ENCODE measurements at regions of chr6 and their contacts with region 1.

Region 1: GRCh38 chr6:134063966-134064445 is 11.6 kb upstream of the SLC2A12 start:
- DNase-seq: peak in 34 of 35 experiments; percentile 10 to 74 (median 42)
- ATAC-seq: peak; percentile 88 to 90 (median 90)
- H3K4me3 ChIP-seq: no peak overlapping the region
- H3K4me3 Mint-ChIP-seq: no peak overlapping the region
- H3K27ac ChIP-seq: no peak overlapping the region
- H3K27ac Mint-ChIP-seq: no peak overlapping the region
- H3K4me1 ChIP-seq: no peaks in the 10 kb centered on the region
- H3K4me1 Mint-ChIP-seq: peaks cover 0 to 1% (median 0%) of the 10 kb centered on the region in 3 donors
- H3K27me3 ChIP-seq: no peaks in the 10 kb centered on the region
- H3K27me3 Mint-ChIP-seq: peaks cover 0 to 10% of the 10 kb centered on the region in 2 donors

Region 2: DNA sequence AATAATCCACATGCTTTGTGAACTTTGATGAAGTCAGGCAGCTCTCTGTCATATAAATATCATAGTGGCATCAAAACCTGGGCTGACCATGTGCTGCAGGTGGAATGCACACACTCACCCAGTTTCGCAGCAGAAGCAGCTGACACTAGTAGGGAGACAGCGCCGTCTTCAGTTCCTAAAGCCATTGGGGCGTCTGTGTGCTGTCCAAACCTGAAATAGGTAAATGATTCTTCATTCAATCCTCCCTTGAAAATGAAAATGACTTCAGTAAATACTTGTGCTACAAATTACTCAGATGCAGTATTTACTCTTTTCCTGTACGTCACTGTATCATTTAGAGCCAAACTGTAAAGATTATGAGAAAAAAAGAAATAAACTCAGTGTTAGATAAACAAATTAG is 695.3 kb before region 1 on chr6:
- CTCF ChIA-PET with region 1: no interaction called
- POLR2A ChIA-PET with region 1: no interaction called
- DNase-seq: no peak
- ATAC-seq: no peak
- H3K4me3 ChIP-seq: no peak overlapping the region
- H3K4me3 Mint-ChIP-seq: no peak overlapping the region
- H3K27ac ChIP-seq: no peak overlapping the region
- H3K27ac Mint-ChIP-seq: no peak overlapping the region
- H3K4me1 ChIP-seq: no peaks in the 10 kb centered on the region
- H3K4me1 Mint-ChIP-seq: no peaks in the 10 kb centered on the region
- H3K27me3 ChIP-seq: no peaks in the 10 kb centered on the region
- H3K27me3 Mint-ChIP-seq: peaks cover 0 to 5% of the 10 kb centered on the region in 2 donors

Region 3: GRCh38 chr6:134047673-134048072 is 16.3 kb before region 1 on chr6:
- CTCF ChIA-PET with region 1: interaction called, 6 to 11 read pairs
- POLR2A ChIA-PET with region 1: interaction called in 1 of 2 experiments, 4 read pairs
- DNase-seq: no peak
- ATAC-seq: no peak
- H3K4me3 ChIP-seq: no peak overlapping the region
- H3K4me3 Mint-ChIP-seq: no peak overlapping the region
- H3K27ac ChIP-seq: no peak overlapping the region
- H3K27ac Mint-ChIP-seq: no peak overlapping the region
- H3K4me1 ChIP-seq: peaks cover 0 to 8% of the 10 kb centered on the region in 2 experiments
- H3K4me1 Mint-ChIP-seq: peaks cover 5 to 13% (median 9%) of the 10 kb centered on the region in 3 donors
- H3K27me3 ChIP-seq: peaks cover 0 to 11% of the 10 kb centered on the region in 2 experiments
- H3K27me3 Mint-ChIP-seq: peaks cover 5 to 7% of the 10 kb centered on the region in 2 donors